Prostate gland (tissue), 2 donors: ENCODE measurements at regions of chr20 and their contacts with region 1.

Region 1: DNA sequence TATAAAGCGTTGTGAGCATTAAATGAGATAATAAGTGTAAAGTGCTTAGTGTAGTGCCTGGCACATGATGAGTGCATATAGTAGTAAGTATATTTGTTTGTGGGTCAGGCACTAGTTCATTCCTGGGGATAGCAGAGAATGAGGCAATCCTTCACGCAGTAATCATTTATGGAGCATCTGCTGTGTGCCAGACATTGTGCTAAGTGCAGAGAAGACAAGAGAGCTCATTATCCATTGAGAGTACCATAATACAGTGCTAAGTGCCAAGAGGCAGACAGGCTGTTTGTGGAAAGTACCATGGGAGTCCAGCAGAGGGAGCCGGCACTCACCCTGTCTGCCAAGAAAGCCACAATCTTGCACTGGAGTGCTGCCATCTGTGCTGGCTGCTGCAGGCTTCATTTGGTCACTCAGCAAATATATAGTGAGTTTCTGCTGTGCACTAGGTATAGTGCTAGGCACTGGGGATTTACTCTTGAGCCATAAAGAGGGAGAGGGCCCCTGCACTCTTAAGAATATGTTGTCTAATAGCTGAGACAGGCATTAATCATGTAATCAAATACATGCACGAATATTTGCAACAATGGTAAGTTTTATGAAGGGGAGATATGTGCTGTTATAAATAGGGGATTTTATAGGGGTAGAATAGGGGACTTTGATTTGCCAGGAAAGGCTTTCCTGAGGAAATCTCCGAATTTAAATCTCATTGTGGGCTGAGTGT is 12.9 kb upstream of the MROH8 start:
- DNase-seq: peak; percentile 88
- H3K4me3 ChIP-seq: no peak overlapping the region
- H3K27ac ChIP-seq: no peak overlapping the region
- H3K4me1 ChIP-seq: peaks cover 4% of the 10 kb centered on the region
- H3K27me3 ChIP-seq: no peaks in the 10 kb centered on the region
- CTCF ChIP-seq: peak in 3 of 4 experiments; percentile 79 to 90 (median 88)
- POLR2A ChIP-seq: no peak

Region 2: DNA sequence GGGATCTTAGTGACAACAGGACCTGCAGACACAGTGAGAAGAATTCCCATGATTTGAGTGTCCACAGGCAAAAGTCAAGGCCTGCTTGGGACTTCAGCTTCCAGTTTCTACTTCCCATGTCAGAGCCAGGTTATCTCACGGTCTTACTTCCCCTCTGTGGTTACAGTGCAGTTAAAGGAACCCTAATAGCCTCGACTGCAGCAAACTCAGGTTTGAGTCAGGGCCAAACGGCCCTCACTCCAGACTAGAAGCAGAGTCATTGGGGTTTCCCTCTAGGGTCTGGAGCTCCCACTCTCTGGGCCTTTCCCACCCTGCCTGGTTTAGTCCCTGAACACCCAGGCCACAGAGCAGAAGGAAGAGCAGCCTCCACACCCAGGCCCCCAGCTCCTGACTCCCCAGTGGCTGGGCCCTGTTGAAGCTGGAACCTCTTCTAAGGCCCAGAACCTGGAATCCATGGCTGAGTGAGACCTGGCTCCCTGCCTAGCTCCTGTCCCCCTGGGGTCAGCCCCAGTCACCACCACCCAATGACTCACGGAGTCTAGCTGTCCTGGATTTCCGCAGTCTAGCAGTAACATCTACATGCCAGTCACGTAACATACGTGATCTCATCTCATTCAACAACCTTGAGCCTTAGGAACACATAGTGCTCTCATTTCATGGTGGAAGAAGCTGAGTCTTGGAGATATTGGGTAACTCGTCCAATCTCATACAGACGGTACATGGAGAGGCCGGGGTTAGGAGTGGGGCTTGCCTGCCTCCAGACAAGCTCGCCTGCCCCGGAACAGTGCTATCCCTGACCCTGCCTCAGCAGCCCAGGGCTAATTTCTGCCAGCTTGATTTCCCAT is 78.5 kb after region 1 on chr20:
- intact Hi-C with region 1: loop called (anchors 5 kb)
- DNase-seq: no peak
- H3K4me3 ChIP-seq: no peak overlapping the region
- H3K27ac ChIP-seq: no peak overlapping the region
- H3K4me1 ChIP-seq: no peaks in the 10 kb centered on the region
- H3K27me3 ChIP-seq: no peaks in the 10 kb centered on the region
- CTCF ChIP-seq: no peak
- POLR2A ChIP-seq: no peak

Region 3: GRCh38 chr20:37384683-37385174 is 192.4 kb after region 1 on chr20:
- intact Hi-C with region 1: loop called (anchors 10 kb)
- DNase-seq: no peak
- H3K4me3 ChIP-seq: peak overlapping the region; percentile 10 to 12
- H3K27ac ChIP-seq: no peak overlapping the region
- H3K4me1 ChIP-seq: no peaks in the 10 kb centered on the region
- H3K27me3 ChIP-seq: no peaks in the 10 kb centered on the region
- CTCF ChIP-seq: peak; percentile 85 to 95 (median 92)
- POLR2A ChIP-seq: no peak

Region 4: GRCh38 chr20:37534401-37535157 is 342.3 kb after region 1 on chr20:
- intact Hi-C with region 1: loop called (anchors 5 kb)
- DNase-seq: peak; percentile 75
- H3K4me3 ChIP-seq: no peak overlapping the region
- H3K27ac ChIP-seq: no peak overlapping the region
- H3K4me1 ChIP-seq: no peaks in the 10 kb centered on the region
- H3K27me3 ChIP-seq: no peaks in the 10 kb centered on the region
- CTCF ChIP-seq: peak; percentile 75 to 94 (median 89)
- POLR2A ChIP-seq: no peak